H1 (cell line): ENCODE measurements at regions of chr13 and their contacts with region 1.

Region 1: DNA sequence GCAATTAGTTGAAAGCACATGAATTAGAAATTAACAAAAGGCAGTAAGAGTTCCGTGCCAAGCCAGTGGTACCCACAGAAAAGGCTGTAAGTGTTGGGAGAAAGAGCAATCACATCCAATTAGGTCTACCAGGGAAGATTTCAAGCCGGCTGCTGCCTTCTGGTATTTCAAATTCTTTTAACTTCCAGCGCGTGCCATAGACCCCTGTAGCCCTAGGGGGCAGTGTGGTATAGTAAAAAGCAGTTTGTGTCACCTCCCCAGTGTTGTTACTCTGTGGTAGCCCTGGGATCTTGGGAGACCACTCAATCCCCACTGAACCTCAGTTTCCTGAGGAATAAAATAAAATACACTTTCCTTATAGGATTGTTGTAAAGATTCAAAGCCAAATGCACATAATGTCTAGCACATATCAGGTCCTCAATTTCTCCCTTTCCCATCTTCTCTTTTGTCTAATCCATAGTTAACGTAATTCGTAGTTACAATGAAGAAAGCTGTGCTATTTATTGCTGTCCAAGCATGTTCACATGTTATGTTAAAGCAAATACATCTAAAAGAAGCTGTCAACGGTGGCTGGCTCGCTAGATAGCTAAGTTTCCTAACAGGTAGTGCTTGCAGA is 230.2 kb downstream of the TDRD3 start:
- DNase-seq: peak; percentile 34 to 83
- H3K4me3 ChIP-seq: no peak overlapping the region
- H3K27ac ChIP-seq: no peak overlapping the region
- H3K4me1 ChIP-seq: peaks cover 0 to 3% (median 3%) of the 10 kb centered on the region in 4 experiments; a peak in 3 of 7 replicates
- H3K27me3 ChIP-seq: no peaks in the 10 kb centered on the region
- CTCF ChIP-seq: peak; percentile 61 to 89 (median 79)
- EP300 ChIP-seq: no peak
- POLR2A ChIP-seq: no peak
- RAD21 ChIP-seq: peak; percentile 93 to 94

Region 2: DNA sequence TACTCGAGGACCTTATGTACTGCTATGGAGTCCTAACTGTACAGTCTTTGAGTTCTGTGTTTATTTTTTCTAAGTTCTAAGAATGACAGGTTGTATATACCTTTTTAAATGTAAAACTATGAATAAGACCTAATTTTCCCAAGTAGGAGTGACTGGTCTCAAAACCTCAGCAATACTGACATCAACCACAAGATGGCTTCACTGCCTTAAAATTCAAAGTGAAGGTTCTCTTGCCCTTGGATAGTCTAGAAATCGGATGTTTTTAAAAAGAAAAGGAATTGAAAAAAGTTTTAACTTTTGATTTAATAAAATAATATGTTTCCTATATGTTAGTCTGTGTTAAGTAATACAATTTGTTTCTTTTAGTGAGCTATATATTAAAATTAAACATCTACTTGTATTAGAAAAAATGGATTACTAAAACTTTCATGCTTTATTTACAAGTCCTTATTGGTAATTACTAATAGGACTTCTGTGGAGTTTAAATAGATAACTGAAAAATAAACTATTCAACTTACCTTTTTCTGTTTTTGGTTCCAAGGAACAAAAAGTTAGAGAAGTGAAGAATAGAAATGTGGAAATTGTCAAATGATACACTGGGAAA is 178.2 kb before region 1 on chr13:
- CTCF ChIA-PET with region 1: interaction called, 14 read pairs
- POLR2A ChIA-PET with region 1: no interaction called
- DNase-seq: no peak
- H3K4me3 ChIP-seq: no peak overlapping the region
- H3K27ac ChIP-seq: no peak overlapping the region
- H3K4me1 ChIP-seq: peaks cover 0 to 3% (median 0%) of the 10 kb centered on the region in 4 experiments; a peak in 1 of 7 replicates
- H3K27me3 ChIP-seq: no peaks in the 10 kb centered on the region
- CTCF ChIP-seq: peak in 2 of 3 experiments; percentile 55 to 62; a peak in 2 of 4 replicates
- EP300 ChIP-seq: no peak
- POLR2A ChIP-seq: no peak
- RAD21 ChIP-seq: peak; percentile 74 to 75

Region 3: GRCh38 chr13:60612593-60612992 is 14.6 kb before region 1 on chr13:
- CTCF ChIA-PET with region 1: interaction called, 31 read pairs
- POLR2A ChIA-PET with region 1: no interaction called
- DNase-seq: no peak
- H3K4me3 ChIP-seq: no peak overlapping the region
- H3K27ac ChIP-seq: no peak overlapping the region
- H3K4me1 ChIP-seq: peaks cover 0 to under 1% (median 0%) of the 10 kb centered on the region in 4 experiments; a peak in 2 of 7 replicates
- H3K27me3 ChIP-seq: no peaks in the 10 kb centered on the region
- CTCF ChIP-seq: no peak
- EP300 ChIP-seq: no peak
- POLR2A ChIP-seq: no peak
- RAD21 ChIP-seq: no peak

Region 4: GRCh38 chr13:60645552-60646138 is 18.5 kb after region 1 on chr13:
- CTCF ChIA-PET with region 1: interaction called, 11 read pairs
- POLR2A ChIA-PET with region 1: no interaction called
- DNase-seq: no peak
- H3K4me3 ChIP-seq: no peak overlapping the region
- H3K27ac ChIP-seq: no peak overlapping the region
- H3K4me1 ChIP-seq: peaks cover 0 to 19% (median 7%) of the 10 kb centered on the region in 4 experiments; a peak in 4 of 7 replicates
- H3K27me3 ChIP-seq: no peaks in the 10 kb centered on the region
- CTCF ChIP-seq: no peak
- EP300 ChIP-seq: no peak
- POLR2A ChIP-seq: no peak
- RAD21 ChIP-seq: no peak

Region 5: GRCh38 chr13:60654415-60654814 is 27.2 kb after region 1 on chr13:
- CTCF ChIA-PET with region 1: interaction called, 10 read pairs
- POLR2A ChIA-PET with region 1: no interaction called
- DNase-seq: no peak
- H3K4me3 ChIP-seq: no peak overlapping the region
- H3K27ac ChIP-seq: no peak overlapping the region
- H3K4me1 ChIP-seq: no peaks in the 10 kb centered on the region
- H3K27me3 ChIP-seq: no peaks in the 10 kb centered on the region
- CTCF ChIP-seq: peak; percentile 43 to 68 (median 57)
- EP300 ChIP-seq: no peak
- POLR2A ChIP-seq: no peak
- RAD21 ChIP-seq: peak; percentile 73 to 82

Region 6: DNA sequence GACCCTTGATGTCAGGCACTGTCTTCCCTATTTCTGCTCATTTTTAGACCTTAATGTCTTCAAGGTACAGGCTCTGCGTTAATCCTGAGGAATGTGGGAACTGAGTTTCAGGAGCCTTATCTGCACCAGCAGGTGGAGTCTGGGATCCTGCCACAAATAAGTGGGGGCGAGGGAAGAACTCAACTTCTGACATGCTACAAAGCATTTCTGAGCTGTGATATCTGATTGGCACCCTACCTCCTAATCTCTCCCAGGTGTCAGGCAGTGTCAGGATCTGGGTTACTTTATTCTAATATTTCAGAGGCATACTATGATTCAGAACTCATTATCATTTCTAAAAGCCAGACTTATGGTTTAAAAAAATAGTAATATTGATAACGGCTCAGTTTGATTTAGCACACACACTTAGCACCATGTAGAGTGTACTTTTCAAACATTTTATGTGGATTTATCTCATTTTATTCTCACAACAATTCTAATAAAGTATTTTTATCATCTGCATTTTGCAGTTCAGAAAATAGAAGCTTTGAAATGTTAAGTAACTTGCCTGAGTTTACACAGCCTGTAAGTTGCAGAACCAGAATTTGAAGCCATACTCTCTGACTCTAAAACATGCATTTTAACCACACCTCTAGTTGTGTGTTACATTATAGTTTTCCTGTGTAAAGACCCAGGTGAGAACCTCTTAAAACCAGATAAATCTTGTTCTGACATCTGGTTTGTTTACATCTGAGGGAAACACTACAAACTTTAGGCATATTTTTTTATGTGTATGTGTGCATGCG is 128.4 kb after region 1 on chr13:
- CTCF ChIA-PET with region 1: interaction called, 10 read pairs
- POLR2A ChIA-PET with region 1: no interaction called
- DNase-seq: no peak
- H3K4me3 ChIP-seq: no peak overlapping the region
- H3K27ac ChIP-seq: no peak overlapping the region
- H3K4me1 ChIP-seq: peaks cover 0 to 11% (median 4%) of the 10 kb centered on the region in 4 experiments; a peak in 3 of 7 replicates
- H3K27me3 ChIP-seq: no peaks in the 10 kb centered on the region
- CTCF ChIP-seq: peak; percentile 41 to 63 (median 52)
- EP300 ChIP-seq: no peak
- POLR2A ChIP-seq: no peak
- RAD21 ChIP-seq: peak; percentile 58 to 65